OCI-LY7 (cell line): ENCODE measurements at regions of chr11 and their contacts with region 1.

Region 1: GRCh38 chr11:99015634-99016454 is 4.9 kb upstream of the CNTN5 start:
- DNase-seq: peak; percentile 58
- H3K4me3 ChIP-seq: no peak overlapping the region
- H3K27ac ChIP-seq: no peak overlapping the region
- H3K4me1 ChIP-seq: no peaks in the 10 kb centered on the region
- CTCF ChIP-seq: peak; percentile 95

Region 2: GRCh38 chr11:99268886-99269285 is 253.0 kb after region 1 on chr11:
- CTCF ChIA-PET with region 1: no interaction called
- POLR2A ChIA-PET with region 1: no interaction called
- intact Hi-C with region 1: no loop called
- DNase-seq: no peak
- H3K4me3 ChIP-seq: no peak overlapping the region
- H3K27ac ChIP-seq: no peak overlapping the region
- H3K4me1 ChIP-seq: no peaks in the 10 kb centered on the region
- CTCF ChIP-seq: no peak

Region 3: GRCh38 chr11:99739464-99740089 is 723.7 kb after region 1 on chr11:
- CTCF ChIA-PET with region 1: no interaction called
- POLR2A ChIA-PET with region 1: no interaction called
- intact Hi-C with region 1: loop called (anchors 5 kb)
- DNase-seq: peak; percentile 10
- H3K4me3 ChIP-seq: no peak overlapping the region
- H3K27ac ChIP-seq: no peak overlapping the region
- H3K4me1 ChIP-seq: no peaks in the 10 kb centered on the region
- CTCF ChIP-seq: peak; percentile 80